IMR-90 (cell line): ENCODE measurements at regions of chr13 and their contacts with region 1.

Region 1: DNA sequence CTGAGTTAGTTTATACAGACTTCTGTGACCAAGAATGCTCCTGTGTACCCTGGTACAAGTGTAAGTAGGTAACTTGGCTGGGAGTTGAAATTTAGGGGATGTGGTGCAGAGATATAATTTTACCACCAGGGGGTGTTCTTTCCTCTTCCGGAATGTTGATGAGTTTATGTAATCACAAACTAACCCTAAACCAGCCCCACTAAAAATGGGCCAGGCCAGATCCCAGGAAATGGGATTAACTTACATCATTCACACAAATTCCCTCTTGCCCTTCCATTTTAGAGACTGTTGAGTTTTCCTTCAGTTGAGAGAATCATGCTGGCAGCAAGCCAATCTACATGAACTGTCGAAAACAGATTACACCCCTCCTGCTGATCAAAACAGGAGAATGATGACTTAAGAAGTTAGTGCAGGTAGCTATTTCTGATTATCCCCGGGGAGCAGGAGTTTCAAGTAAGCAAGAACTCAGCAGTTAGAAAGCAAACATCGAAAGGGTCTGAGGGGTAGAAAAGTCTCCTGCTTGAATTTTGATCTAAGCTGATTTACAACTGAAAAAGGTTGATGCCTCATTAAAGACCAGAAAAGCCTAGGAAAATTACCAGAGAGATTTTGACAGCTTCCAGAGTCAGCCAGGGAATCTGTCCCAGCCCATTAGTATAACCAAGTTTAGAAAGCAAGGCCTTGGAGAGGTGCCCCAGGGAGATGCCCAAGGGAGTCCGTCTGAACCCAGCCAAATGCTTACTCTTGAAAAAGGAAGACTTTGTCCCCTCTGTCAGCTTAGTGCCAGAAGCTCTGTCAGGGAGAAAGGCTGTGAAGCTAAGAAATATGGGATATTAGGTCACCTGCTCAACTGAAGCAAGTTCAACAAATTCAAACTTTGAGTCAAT is 32.3 kb upstream of the MED4 start:
- DNase-seq: peak; percentile 60
- ATAC-seq: peak; percentile 77
- H3K4me3 ChIP-seq: no peak overlapping the region
- H3K27ac ChIP-seq: no peak overlapping the region
- H3K4me1 ChIP-seq: peaks cover 2% of the 10 kb centered on the region; the same call in 1 of the 2 replicates
- H3K27me3 ChIP-seq: peaks cover 2% of the 10 kb centered on the region; the same call in 1 of the 2 replicates
- CTCF ChIP-seq: peak; percentile 73
- POLR2A ChIP-seq: no peak
- RAD21 ChIP-seq: peak; percentile 60

Region 2: DNA sequence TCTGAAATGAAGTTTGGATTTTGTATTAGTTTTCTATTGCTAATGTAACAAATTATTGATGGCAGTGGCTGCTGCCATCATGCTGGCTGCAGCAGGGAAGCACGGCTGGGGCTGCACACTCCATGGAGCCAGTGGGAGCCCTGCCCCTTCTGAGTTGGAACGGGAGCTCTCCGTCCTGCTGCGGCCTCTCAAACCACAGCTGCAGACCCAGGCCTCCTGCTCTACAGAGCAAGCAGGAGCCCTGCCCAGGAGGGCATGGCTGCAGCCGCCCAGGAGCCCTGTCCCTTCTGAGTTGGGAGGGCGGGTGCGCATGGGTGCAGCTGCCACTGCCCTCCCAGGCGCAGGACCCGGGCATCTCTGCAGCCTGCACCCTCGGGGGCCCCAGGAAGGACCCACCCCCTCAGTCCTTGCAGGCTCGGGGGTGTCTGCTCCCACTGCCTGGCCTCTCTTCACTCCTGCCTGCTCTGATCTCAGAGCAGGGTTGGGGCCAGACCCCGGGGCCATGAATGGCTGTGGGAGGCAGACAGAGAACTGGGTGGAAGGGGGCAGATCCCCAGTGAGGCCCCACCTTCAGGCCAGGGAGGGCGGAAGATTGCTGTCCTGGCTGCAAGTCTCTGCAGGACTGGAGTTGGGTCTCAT is 1309.2 kb before region 1 on chr13:
- CTCF ChIA-PET with region 1: no interaction called
- POLR2A ChIA-PET with region 1: no interaction called
- dilution Hi-C with region 1: no loop called
- in situ Hi-C with region 1: no loop called
- intact Hi-C with region 1: no loop called
- DNase-seq: no peak
- ATAC-seq: no peak
- H3K4me3 ChIP-seq: no peak overlapping the region
- H3K27ac ChIP-seq: no peak overlapping the region
- H3K4me1 ChIP-seq: no peaks in the 10 kb centered on the region
- H3K27me3 ChIP-seq: peaks cover 5% of the 10 kb centered on the region; the same call in 1 of the 2 replicates
- CTCF ChIP-seq: no peak
- POLR2A ChIP-seq: no peak
- RAD21 ChIP-seq: no peak

Region 3: DNA sequence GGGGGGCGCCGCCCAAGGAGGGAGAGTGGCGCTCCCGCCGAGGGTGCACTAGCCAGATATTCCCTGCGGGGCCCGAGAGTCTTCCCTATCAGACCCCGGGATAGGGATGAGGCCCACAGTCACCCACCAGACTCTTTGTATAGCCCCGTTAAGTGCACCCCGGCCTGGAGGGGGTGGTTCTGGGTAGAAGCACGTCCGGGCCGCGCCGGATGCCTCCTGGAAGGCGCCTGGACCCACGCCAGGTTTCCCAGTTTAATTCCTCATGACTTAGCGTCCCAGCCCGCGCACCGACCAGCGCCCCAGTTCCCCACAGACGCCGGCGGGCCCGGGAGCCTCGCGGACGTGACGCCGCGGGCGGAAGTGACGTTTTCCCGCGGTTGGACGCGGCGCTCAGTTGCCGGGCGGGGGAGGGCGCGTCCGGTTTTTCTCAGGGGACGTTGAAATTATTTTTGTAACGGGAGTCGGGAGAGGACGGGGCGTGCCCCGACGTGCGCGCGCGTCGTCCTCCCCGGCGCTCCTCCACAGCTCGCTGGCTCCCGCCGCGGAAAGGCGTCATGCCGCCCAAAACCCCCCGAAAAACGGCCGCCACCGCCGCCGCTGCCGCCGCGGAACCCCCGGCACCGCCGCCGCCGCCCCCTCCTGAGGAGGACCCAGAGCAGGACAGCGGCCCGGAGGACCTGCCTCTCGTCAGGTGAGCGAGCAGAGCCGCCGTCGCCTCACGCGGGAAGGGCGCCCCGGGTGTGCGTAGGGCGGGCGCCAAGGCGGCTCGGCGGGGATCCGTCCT is 176.4 kb after region 1 on chr13 and contains the start of gene RB1:
- CTCF ChIA-PET with region 1: no interaction called
- POLR2A ChIA-PET with region 1: no interaction called
- dilution Hi-C with region 1: no loop called
- in situ Hi-C with region 1: no loop called
- intact Hi-C with region 1: loop called (anchors 2 kb)
- DNase-seq: peak; percentile 87
- ATAC-seq: peak; percentile 92
- H3K4me3 ChIP-seq: peak within 1 kb of the TSS; percentile 59
- H3K27ac ChIP-seq: peak within 1 kb of the TSS; percentile 76
- H3K4me1 ChIP-seq: no peaks in the 10 kb centered on the region
- H3K27me3 ChIP-seq: no peaks in the 10 kb centered on the region
- CTCF ChIP-seq: no peak
- POLR2A ChIP-seq: peak; percentile 90
- RAD21 ChIP-seq: no peak
- total RNA-seq, gene RB1: 15.4 and 23.1 TPM in 2 replicates